Activated CD4-positive, alpha-beta T cell treated with anti-CD3 and anti-CD28 coated beads for 36 hours (primary cell): ENCODE measurements at regions of chr2 and their contacts with region 1.

Region 1: DNA sequence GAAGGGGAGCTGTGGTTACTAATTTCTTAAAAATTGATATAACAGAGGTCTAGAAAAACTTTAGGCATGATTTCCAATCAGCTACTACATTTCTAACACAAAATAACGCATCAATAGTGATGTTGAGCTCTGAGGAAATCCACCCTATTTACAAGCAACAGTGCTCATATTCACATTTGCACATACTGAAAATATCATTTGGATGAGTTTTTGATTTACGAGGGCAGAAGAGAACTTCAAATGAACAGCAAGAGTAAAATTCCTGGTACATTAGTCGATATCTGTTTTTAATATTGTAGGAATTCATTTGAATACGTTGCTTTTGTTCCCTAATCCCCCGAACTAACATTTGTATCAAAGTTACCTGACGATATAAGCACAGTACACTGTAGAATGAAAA is 761.0 kb upstream of the POU3F3 start:
- DNase-seq: no peak
- ATAC-seq: no peak
- H3K4me3 Mint-ChIP-seq: no peak overlapping the region
- H3K27ac Mint-ChIP-seq: no peak overlapping the region
- H3K4me1 Mint-ChIP-seq: no peaks in the 10 kb centered on the region
- H3K27me3 Mint-ChIP-seq: no peaks in the 10 kb centered on the region

Region 2: DNA sequence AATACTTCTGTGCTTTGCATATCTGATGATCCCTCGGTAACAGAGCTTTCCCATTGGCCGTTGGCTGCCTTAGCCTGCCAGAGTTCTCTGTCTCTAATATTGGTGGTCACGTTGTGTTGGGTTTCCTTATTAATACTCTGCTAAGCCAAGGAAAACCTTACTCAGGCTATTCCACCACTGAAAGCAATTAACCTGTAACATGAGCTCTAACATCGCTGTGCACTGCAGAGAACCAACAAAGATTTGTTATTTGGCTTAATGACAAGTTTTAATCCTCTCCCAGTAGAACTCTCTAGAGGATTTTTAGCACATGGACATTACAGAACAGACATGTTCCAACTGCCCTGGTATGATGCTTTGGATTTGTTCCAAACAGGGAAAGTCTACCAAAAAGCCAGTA is 64.8 kb before region 1 on chr2:
- CTCF ChIA-PET with region 1: no interaction called
- POLR2A ChIA-PET with region 1: no interaction called
- intact Hi-C with region 1: no loop called
- DNase-seq: no peak
- ATAC-seq: no peak
- H3K4me3 Mint-ChIP-seq: no peak overlapping the region
- H3K27ac Mint-ChIP-seq: no peak overlapping the region
- H3K4me1 Mint-ChIP-seq: no peaks in the 10 kb centered on the region
- H3K27me3 Mint-ChIP-seq: no peaks in the 10 kb centered on the region

Region 3: DNA sequence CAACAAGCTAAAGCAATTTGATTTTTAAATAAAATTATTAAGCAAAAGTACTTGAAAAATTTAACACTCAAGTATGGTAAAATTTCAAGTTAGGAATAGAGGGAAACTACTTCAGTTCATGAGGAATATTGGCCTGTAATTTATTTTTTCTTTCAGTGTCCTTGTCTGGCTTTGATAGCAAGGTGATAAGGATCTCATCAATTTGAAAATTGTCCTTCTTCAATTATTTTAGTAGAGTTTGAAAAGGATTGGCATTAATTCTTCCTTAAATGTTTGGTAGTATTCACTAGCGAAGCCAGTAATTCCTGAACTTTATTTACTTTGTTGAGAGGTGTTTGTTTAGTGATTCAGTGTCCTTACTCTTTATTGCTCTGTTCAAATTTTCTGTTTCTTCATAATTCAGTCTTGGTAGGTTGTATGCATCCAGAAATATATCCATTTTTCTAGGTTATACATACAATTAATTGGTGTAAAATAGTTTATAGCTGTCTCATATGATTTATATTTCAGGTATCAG is 84.2 kb after region 1 on chr2:
- CTCF ChIA-PET with region 1: no interaction called
- POLR2A ChIA-PET with region 1: no interaction called
- intact Hi-C with region 1: loop called in 1 of 2 experiments (anchors 5 kb)
- DNase-seq: no peak
- ATAC-seq: no peak
- H3K4me3 Mint-ChIP-seq: no peak overlapping the region
- H3K27ac Mint-ChIP-seq: no peak overlapping the region
- H3K4me1 Mint-ChIP-seq: no peaks in the 10 kb centered on the region
- H3K27me3 Mint-ChIP-seq: no peaks in the 10 kb centered on the region